PC-3 (cell line): ENCODE measurements at regions of chr10 and their contacts with region 1.

Region 1: GRCh38 chr10:36725581-36726520 is 399.5 kb upstream of the ANKRD30A start:
- DNase-seq: peak; percentile 100
- ATAC-seq: peak; percentile 91
- H3K4me3 ChIP-seq: peak overlapping the region; percentile 49
- H3K27ac ChIP-seq: peak overlapping the region; percentile 86
- H3K4me1 ChIP-seq: peaks cover 43% of the 10 kb centered on the region
- H3K27me3 ChIP-seq: no peaks in the 10 kb centered on the region
- CTCF ChIP-seq: peak; percentile 100

Region 2: GRCh38 chr10:35781643-35782035 is 944.2 kb before region 1 on chr10:
- CTCF ChIA-PET with region 1: interaction called, 9 read pairs
- POLR2A ChIA-PET with region 1: no interaction called
- intact Hi-C with region 1: loop called (anchors 1 kb)
- DNase-seq: peak; percentile 72
- ATAC-seq: no peak
- H3K4me3 ChIP-seq: no peak overlapping the region
- H3K27ac ChIP-seq: peak overlapping the region; percentile 72; the same call in 1 of the 2 replicates
- H3K4me1 ChIP-seq: peaks cover 37% of the 10 kb centered on the region
- H3K27me3 ChIP-seq: no peaks in the 10 kb centered on the region
- CTCF ChIP-seq: peak; percentile 72

Region 3: DNA sequence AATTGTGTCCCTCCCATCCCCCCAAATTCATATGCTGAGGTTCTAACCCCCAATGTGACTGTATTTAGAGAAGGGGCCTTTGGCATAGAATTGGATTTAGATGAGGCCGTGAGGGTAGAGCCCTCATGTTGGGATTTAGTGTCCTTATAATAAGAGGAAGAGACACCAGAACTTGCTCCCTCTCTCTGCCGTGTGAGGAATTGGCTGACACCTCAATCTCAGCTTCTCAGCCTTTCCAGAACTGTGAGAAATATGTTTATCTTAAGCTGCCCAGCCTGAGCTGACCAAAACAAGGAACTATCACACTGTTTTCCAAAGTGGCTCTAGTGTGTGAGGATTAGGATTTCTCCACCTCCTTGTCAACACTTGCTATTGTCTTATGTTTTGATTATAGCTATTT is 683.7 kb before region 1 on chr10:
- CTCF ChIA-PET with region 1: no interaction called
- POLR2A ChIA-PET with region 1: no interaction called
- intact Hi-C with region 1: loop called (anchors 10 kb)
- DNase-seq: no peak
- ATAC-seq: no peak; the same call in 1 of the 2 replicates
- H3K4me3 ChIP-seq: no peak overlapping the region
- H3K27ac ChIP-seq: no peak overlapping the region
- H3K4me1 ChIP-seq: no peaks in the 10 kb centered on the region
- H3K27me3 ChIP-seq: no peaks in the 10 kb centered on the region
- CTCF ChIP-seq: peak; percentile 47; the same call in 1 of the 2 replicates

Region 4: GRCh38 chr10:36393801-36394200 is 332.1 kb before region 1 on chr10:
- CTCF ChIA-PET with region 1: no interaction called
- POLR2A ChIA-PET with region 1: interaction called, 5 read pairs
- intact Hi-C with region 1: loop called (anchors 1 kb)
- DNase-seq: peak; percentile 99
- ATAC-seq: peak; percentile 88
- H3K4me3 ChIP-seq: no peak overlapping the region
- H3K27ac ChIP-seq: peak overlapping the region; percentile 21
- H3K4me1 ChIP-seq: peaks cover 13% of the 10 kb centered on the region
- H3K27me3 ChIP-seq: no peaks in the 10 kb centered on the region
- CTCF ChIP-seq: no peak

Region 5: GRCh38 chr10:36629476-36629875 is 96.4 kb before region 1 on chr10:
- CTCF ChIA-PET with region 1: interaction called, 13 read pairs
- POLR2A ChIA-PET with region 1: no interaction called
- intact Hi-C with region 1: loop called (anchors 1 kb)
- DNase-seq: peak; percentile 76
- ATAC-seq: peak; percentile 71
- H3K4me3 ChIP-seq: no peak overlapping the region
- H3K27ac ChIP-seq: peak overlapping the region; percentile 81
- H3K4me1 ChIP-seq: peaks cover 24% of the 10 kb centered on the region
- H3K27me3 ChIP-seq: no peaks in the 10 kb centered on the region
- CTCF ChIP-seq: no peak

Region 6: GRCh38 chr10:36759141-36759805 is 33.4 kb after region 1 on chr10:
- CTCF ChIA-PET with region 1: interaction called, 24 read pairs
- POLR2A ChIA-PET with region 1: interaction called, 5 read pairs
- intact Hi-C with region 1: loop called (anchors 1 kb)
- DNase-seq: peak; percentile 100
- ATAC-seq: peak; percentile 97
- H3K4me3 ChIP-seq: no peak overlapping the region
- H3K27ac ChIP-seq: peak overlapping the region; percentile 55
- H3K4me1 ChIP-seq: peaks cover 30% of the 10 kb centered on the region
- H3K27me3 ChIP-seq: no peaks in the 10 kb centered on the region
- CTCF ChIP-seq: no peak

Region 7: DNA sequence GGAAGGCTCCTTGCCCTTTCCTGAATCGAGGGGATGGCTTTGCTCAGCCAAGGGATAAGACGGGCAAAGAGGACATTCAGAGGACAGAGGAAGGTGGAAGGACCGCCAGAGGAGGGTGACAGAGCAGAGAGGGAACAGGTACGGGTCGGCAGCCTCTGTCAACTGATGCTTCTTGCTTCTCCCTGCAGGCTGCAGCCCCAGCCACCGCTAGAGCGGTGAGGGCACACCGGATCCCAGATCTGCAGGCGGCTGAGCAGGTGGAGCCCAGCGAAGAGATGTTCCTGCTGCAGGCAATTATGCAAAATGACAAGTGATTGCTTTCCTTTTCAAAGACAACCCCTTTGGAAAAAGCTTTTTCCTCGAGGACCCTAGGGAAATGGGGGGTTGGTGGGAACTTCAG is 217.7 kb after region 1 on chr10:
- CTCF ChIA-PET with region 1: no interaction called
- POLR2A ChIA-PET with region 1: no interaction called
- intact Hi-C with region 1: no loop called
- DNase-seq: no peak
- ATAC-seq: no peak
- H3K4me3 ChIP-seq: no peak overlapping the region
- H3K27ac ChIP-seq: no peak overlapping the region
- H3K4me1 ChIP-seq: no peaks in the 10 kb centered on the region; the same call in 1 of the 2 replicates
- H3K27me3 ChIP-seq: peaks cover 23% of the 10 kb centered on the region; the same call in 1 of the 2 replicates
- CTCF ChIP-seq: no peak